Activated T-helper 2 cell treated with anti-CD3 and anti-CD28 coated beads, Interferon-gamma antibody, Interleukin-2, Interleukin-4, amounts not matched to agents 10 μg/mL and 5 μg/mL and 100 μg/mL, durations not matched to agents 14 hours and 24 hours and 36 hours (primary cell): ENCODE measurements at regions of chr11 and their contacts with region 1.

Region 1: DNA sequence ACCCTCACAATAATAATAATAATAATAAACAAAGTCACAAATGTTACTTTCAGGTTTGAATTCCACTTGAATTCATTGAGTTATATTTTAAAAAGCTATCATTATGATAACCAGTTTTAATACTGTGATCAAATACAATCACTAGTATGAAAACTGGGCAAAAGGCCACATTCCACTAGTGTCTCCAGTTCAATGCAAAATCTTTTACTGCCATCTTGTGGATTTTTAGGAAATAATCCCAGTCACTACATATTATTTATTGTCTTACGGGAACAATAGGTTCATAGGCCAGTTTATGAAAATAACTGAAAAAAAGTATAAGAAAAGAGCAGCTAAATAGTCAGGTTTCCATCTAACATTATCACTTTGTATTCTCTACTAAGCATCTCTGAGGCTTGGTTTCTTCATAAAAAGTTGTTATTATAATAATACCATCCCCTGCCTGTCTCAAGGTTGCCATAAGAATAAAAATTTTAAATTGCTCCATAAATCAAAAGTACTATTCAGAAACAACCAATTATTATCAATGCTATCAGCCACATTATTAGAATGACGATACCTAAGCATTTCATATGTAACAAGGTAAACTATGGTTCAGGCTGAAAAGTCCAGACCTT is 533.9 kb upstream of the CCDC90B start:
- DNase-seq: no peak
- H3K4me3 Mint-ChIP-seq: no peak overlapping the region
- H3K27ac Mint-ChIP-seq: no peak overlapping the region
- H3K4me1 Mint-ChIP-seq: no peaks in the 10 kb centered on the region
- H3K27me3 Mint-ChIP-seq: peaks cover 2% of the 10 kb centered on the region

Region 2: GRCh38 chr11:82718307-82718706 is 1101.7 kb before region 1 on chr11:
- intact Hi-C with region 1: loop called (anchors 2 kb)
- DNase-seq: no peak
- H3K4me3 Mint-ChIP-seq: no peak overlapping the region
- H3K27ac Mint-ChIP-seq: no peak overlapping the region
- H3K4me1 Mint-ChIP-seq: no peaks in the 10 kb centered on the region
- H3K27me3 Mint-ChIP-seq: peaks cover 4% of the 10 kb centered on the region

Region 3: GRCh38 chr11:83292709-83293456 is 527.2 kb before region 1 on chr11:
- intact Hi-C with region 1: loop called (anchors 2 kb)
- DNase-seq: no peak
- H3K4me3 Mint-ChIP-seq: no peak overlapping the region
- H3K27ac Mint-ChIP-seq: no peak overlapping the region
- H3K4me1 Mint-ChIP-seq: peaks cover 5% of the 10 kb centered on the region
- H3K27me3 Mint-ChIP-seq: peaks cover 18% of the 10 kb centered on the region